ENCODE measurements at regions of chr22 and their contacts with region 1.

Region 1: GRCh38 chr22:23893943-23894709 is at the start of gene MIF:
- DNase-seq: peak; percentile 95
- H3K4me3 ChIP-seq: peak within 1 kb of the TSS; percentile 79 to 93 (median 91)
- H3K27ac ChIP-seq: peak within 1 kb of the TSS; percentile 86
- H3K4me1 ChIP-seq: peaks cover 21% of the 10 kb centered on the region
- H3K27me3 ChIP-seq: no peaks in the 10 kb centered on the region
- CTCF ChIP-seq: peak; percentile 69 to 83
- total RNA-seq, gene MIF: 359 to 1,214 TPM

Region 2: DNA sequence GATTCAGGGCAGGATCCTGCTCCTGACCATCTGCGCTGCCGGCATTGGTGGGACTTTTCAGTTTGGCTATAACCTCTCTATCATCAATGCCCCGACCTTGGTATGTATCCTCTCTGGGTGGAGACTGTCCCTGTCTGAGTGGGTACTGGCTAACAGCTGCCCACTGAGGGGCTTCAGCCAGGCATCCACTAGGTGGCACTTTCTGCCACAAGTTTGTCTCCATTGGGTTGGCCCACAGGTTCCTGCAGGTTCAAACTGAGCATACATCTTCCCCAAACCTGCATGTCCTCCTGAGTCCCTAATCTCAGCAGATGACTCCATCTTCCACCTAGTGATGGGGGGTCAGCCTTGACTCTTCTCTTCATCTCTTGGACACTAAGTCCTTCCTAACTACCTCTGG is 32.0 kb before region 1 on chr22:
- CTCF ChIA-PET with region 1: interaction called, 33 read pairs
- dilution Hi-C with region 1: no loop called
- in situ Hi-C with region 1: no loop called
- intact Hi-C with region 1: no loop called
- DNase-seq: peak; percentile 28
- H3K4me3 ChIP-seq: no peak overlapping the region
- H3K27ac ChIP-seq: no peak overlapping the region
- H3K4me1 ChIP-seq: peaks cover 13% of the 10 kb centered on the region
- H3K27me3 ChIP-seq: no peaks in the 10 kb centered on the region
- CTCF ChIP-seq: peak; percentile 56 to 66